ENCODE measurements at regions of chr2 and their contacts with region 1.

Region 1: DNA sequence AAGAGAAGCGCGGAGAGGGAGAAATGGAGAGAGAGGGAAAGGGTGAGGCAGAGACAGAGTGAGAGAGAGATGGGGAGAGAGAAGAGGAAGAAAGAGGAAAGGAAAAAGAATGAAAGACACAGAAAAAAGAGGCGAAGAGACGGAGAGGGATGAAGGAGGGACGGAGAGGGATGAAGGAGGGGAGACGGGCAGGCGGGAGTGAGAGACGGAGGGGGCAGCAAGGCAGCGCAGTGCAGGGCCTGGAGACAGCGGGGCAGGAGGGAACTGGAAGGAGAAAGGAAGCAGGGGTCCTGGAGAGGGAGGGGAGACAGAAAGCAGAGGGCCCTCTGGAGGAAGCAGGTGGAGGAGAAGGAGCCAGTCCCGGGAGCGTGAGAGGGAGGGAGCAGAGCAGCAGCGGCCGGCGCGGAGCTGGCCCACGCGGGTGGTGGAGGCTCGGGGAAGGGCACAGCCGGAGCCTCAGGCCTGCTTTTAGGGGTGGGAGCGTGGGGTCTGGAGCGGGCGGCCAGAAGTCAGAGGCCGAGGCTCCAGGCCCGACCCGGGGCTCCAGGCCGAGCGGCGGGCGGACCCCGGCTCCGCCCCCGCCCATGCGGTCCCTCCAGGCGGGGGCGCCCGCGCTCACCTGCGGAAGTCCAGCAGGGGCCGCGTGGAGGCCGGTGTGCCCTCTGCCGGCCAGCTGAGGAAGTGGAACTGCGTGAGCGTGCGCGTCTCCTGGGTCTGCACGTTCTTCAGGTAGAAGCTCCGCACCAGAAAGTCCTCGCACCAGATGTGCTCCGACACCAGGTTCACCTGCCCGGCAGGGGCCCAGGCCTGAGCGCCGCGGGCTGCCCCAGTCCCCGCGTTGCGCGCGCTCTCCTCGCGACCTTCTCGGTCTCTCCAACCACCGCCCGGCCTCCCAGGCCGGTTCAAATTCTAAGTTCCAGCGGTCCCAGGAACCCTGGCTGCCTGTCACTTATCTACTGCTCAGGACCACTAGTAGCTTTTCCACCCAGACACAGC is 14.5 kb downstream of the PTPRN start:
- DNase-seq: peak; percentile 91 to 95
- H3K4me3 ChIP-seq: peak overlapping the region; percentile 57
- H3K4me3 Mint-ChIP-seq: peak overlapping the region; percentile 71
- H3K27ac Mint-ChIP-seq: peak overlapping the region; percentile 22
- H3K4me1 ChIP-seq: peaks cover 4% of the 10 kb centered on the region; the same call in 1 of the 2 replicates
- H3K4me1 Mint-ChIP-seq: no peaks in the 10 kb centered on the region
- H3K27me3 ChIP-seq: no peaks in the 10 kb centered on the region; the same call in 1 of the 2 replicates
- H3K27me3 Mint-ChIP-seq: no peaks in the 10 kb centered on the region
- CTCF ChIP-seq: peak; percentile 98 to 99

Region 2: DNA sequence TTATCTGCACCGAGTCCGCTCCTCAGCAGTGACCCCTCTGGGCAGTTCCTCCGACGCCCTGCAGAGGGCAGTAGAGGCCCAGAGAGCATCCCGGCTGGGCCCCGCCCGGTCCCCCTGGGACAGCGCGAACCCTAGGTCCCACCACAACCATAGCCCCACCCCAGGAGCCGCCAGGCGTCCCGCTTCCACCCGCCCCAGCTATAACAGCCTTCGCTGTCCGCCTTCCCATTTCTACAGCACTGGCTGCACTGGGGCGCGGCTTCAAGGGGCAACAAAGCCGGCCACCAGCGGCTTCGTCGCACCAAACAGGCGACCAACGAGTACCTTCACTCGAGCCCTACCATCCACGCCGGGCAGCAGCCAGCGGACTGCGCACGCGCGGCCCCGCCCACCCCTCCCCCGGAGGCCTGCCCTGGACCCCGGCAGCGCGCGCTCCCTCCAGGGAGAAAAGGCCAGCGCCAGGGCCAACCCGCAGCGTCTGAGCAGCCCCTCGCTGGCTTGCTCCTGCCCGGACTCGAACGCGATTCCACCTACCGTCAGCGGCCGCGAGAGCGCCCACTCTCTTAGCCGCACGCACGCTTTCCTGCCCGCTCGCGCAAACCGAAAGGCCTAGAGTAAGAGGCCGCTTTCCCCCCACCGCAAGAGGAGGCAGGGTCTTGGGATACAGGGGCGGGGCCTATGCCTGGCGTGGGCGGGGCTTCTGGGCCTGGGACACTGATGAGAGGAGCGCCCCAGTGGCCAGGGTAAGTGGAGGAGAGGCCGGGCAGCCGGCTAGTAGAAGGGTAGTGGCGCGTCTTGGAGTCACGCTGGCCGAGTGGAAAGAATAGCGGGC is 134.3 kb before region 1 on chr2 and contains the start of gene NHEJ1:
- CTCF ChIA-PET with region 1: interaction called, 10 read pairs
- POLR2A ChIA-PET with region 1: no interaction called
- intact Hi-C with region 1: loop called (anchors 1 kb)
- DNase-seq: peak; percentile 97 to 98
- H3K4me3 ChIP-seq: peak within 1 kb of the TSS; percentile 73
- H3K4me3 Mint-ChIP-seq: peak within 1 kb of the TSS; percentile 78
- H3K27ac Mint-ChIP-seq: peak within 1 kb of the TSS; percentile 84
- H3K4me1 ChIP-seq: peaks cover 11% of the 10 kb centered on the region; the same call in 1 of the 2 replicates
- H3K4me1 Mint-ChIP-seq: peaks cover 14% of the 10 kb centered on the region
- H3K27me3 ChIP-seq: no peaks in the 10 kb centered on the region
- H3K27me3 Mint-ChIP-seq: no peaks in the 10 kb centered on the region
- CTCF ChIP-seq: peak; percentile 98
- total RNA-seq, gene NHEJ1: 28.5 and 29.6 TPM in 2 replicates

Region 3: GRCh38 chr2:219177552-219178376 is 116.9 kb before region 1 on chr2 and contains the start of gene RETREG2:
- CTCF ChIA-PET with region 1: interaction called, 11 read pairs
- POLR2A ChIA-PET with region 1: no interaction called
- intact Hi-C with region 1: no loop called
- DNase-seq: peak; percentile 89 to 90
- H3K4me3 ChIP-seq: peak within 1 kb of the TSS; percentile 93
- H3K4me3 Mint-ChIP-seq: peak within 1 kb of the TSS; percentile 90
- H3K27ac Mint-ChIP-seq: peak within 1 kb of the TSS; percentile 89
- H3K4me1 ChIP-seq: peaks cover 12% of the 10 kb centered on the region
- H3K4me1 Mint-ChIP-seq: peaks cover 18% of the 10 kb centered on the region
- H3K27me3 ChIP-seq: no peaks in the 10 kb centered on the region; the same call in 1 of the 2 replicates
- H3K27me3 Mint-ChIP-seq: no peaks in the 10 kb centered on the region
- CTCF ChIP-seq: peak; percentile 17 to 38
- total RNA-seq, gene RETREG2: 59.5 and 62.0 TPM in 2 replicates

Region 4: GRCh38 chr2:219218732-219219701 is 75.6 kb before region 1 on chr2 and contains the start of gene ABCB6:
- CTCF ChIA-PET with region 1: interaction called, 18 read pairs
- POLR2A ChIA-PET with region 1: interaction called, 5 read pairs
- intact Hi-C with region 1: no loop called
- DNase-seq: peak; percentile 97
- H3K4me3 ChIP-seq: peak within 1 kb of the TSS; percentile 89
- H3K4me3 Mint-ChIP-seq: peak within 1 kb of the TSS; percentile 96
- H3K27ac Mint-ChIP-seq: peak within 1 kb of the TSS; percentile 95
- H3K4me1 ChIP-seq: peaks cover 18% of the 10 kb centered on the region
- H3K4me1 Mint-ChIP-seq: no peaks in the 10 kb centered on the region
- H3K27me3 ChIP-seq: no peaks in the 10 kb centered on the region
- H3K27me3 Mint-ChIP-seq: no peaks in the 10 kb centered on the region
- CTCF ChIP-seq: no peak
- total RNA-seq, gene ABCB6: 66.0 and 68.6 TPM in 2 replicates

Region 5: GRCh38 chr2:219253753-219254590 is 40.7 kb before region 1 on chr2 and contains the start of gene TUBA4A:
- CTCF ChIA-PET with region 1: interaction called, 25 read pairs
- POLR2A ChIA-PET with region 1: interaction called, 4 read pairs
- intact Hi-C with region 1: loop called (anchors 2 kb)
- DNase-seq: peak; percentile 81 to 89
- H3K4me3 ChIP-seq: peak within 1 kb of the TSS; percentile 48
- H3K4me3 Mint-ChIP-seq: peak within 1 kb of the TSS; percentile 62
- H3K27ac Mint-ChIP-seq: no peak within 1 kb of the TSS
- H3K4me1 ChIP-seq: peaks cover 20% of the 10 kb centered on the region
- H3K4me1 Mint-ChIP-seq: peaks cover 27% of the 10 kb centered on the region
- H3K27me3 ChIP-seq: no peaks in the 10 kb centered on the region
- H3K27me3 Mint-ChIP-seq: peaks cover 4% of the 10 kb centered on the region
- CTCF ChIP-seq: no peak
- total RNA-seq, gene TUBA4A: 14.9 and 15.6 TPM in 2 replicates

Region 6: GRCh38 chr2:219306047-219306446 is 11.4 kb after region 1 on chr2:
- CTCF ChIA-PET with region 1: interaction called, 7 read pairs
- POLR2A ChIA-PET with region 1: no interaction called
- intact Hi-C with region 1: loop called (anchors 1 kb)
- DNase-seq: no peak
- H3K4me3 ChIP-seq: no peak overlapping the region
- H3K4me3 Mint-ChIP-seq: no peak overlapping the region
- H3K27ac Mint-ChIP-seq: no peak overlapping the region
- H3K4me1 ChIP-seq: no peaks in the 10 kb centered on the region
- H3K4me1 Mint-ChIP-seq: no peaks in the 10 kb centered on the region
- H3K27me3 ChIP-seq: no peaks in the 10 kb centered on the region; the same call in 1 of the 2 replicates
- H3K27me3 Mint-ChIP-seq: peaks cover 27% of the 10 kb centered on the region
- CTCF ChIP-seq: no peak

Region 7: GRCh38 chr2:219388127-219388844 is 93.6 kb after region 1 on chr2:
- CTCF ChIA-PET with region 1: interaction called, 29 read pairs
- POLR2A ChIA-PET with region 1: interaction called, 10 read pairs
- intact Hi-C with region 1: loop called (anchors 2 kb)
- DNase-seq: peak; percentile 98
- H3K4me3 ChIP-seq: peak overlapping the region; percentile 42
- H3K4me3 Mint-ChIP-seq: peak overlapping the region; percentile 96
- H3K27ac Mint-ChIP-seq: peak overlapping the region; percentile 94
- H3K4me1 ChIP-seq: peaks cover 15% of the 10 kb centered on the region
- H3K4me1 Mint-ChIP-seq: no peaks in the 10 kb centered on the region
- H3K27me3 ChIP-seq: no peaks in the 10 kb centered on the region
- H3K27me3 Mint-ChIP-seq: no peaks in the 10 kb centered on the region
- CTCF ChIP-seq: peak; percentile 32 to 60

Measured in Caco-2 (cell line).